Esophagus muscularis mucosa (tissue), 4 donors: ENCODE measurements at regions of chr7 and their contacts with region 1.

Region 1: GRCh38 chr7:150368096-150368883 is at the start of gene REPIN1:
- DNase-seq: peak; percentile 97
- H3K4me3 ChIP-seq: peak within 1 kb of the TSS; percentile 70 to 96 (median 82)
- H3K27ac ChIP-seq: peak within 1 kb of the TSS; percentile 91 to 98 (median 92)
- H3K4me1 ChIP-seq: peaks cover 32 to 48% (median 45%) of the 10 kb centered on the region in 4 donors
- H3K27me3 ChIP-seq: no peaks in the 10 kb centered on the region
- CTCF ChIP-seq: peak in 1 of 3 experiments; percentile 12
- EP300 ChIP-seq: no peak
- POLR2A ChIP-seq: peak; percentile 38
- total RNA-seq, gene REPIN1: 66.8 to 143 (median 97.7) TPM

Region 2: DNA sequence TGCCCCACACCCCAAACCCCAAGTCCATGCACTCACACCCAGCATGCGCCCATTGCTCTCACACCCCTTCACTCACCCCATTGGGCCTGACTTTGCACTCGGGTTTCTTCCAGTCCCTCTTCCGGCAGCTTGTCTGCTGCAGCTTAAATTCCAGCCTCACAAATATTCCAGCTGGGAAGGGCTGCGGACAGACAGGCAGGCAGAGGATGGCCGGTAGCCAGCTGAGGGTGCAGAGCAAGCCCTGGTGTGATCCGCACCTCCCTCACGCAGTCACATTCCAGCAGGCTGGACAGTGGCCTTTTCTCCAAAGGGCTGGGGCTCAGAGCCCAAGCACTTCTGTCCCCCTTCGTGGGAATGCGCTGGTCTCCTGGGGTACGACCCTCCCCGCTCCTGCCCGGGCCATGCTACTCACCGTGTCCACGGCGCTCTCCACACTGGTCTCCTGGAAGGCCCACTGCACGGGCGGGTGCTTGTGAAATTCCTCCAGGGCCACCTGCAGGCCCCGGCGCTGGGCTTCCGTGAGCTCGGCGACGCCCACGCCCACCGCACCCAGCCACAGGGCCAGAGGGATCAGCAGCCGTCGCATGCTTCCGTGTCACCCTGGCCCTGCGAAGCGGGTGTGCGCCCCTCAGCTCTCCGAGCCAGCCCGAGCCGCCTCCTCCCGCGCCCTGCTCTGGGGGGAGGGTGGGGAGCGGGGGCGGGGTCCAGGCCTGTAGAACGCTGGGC is 28.1 kb before region 1 on chr7:
- intact Hi-C with region 1: loop called (anchors 2 kb)
- DNase-seq: no peak
- H3K4me3 ChIP-seq: peak overlapping the region; percentile 59 to 79 (median 68)
- H3K27ac ChIP-seq: peak overlapping the region; percentile 82 to 93 (median 88)
- H3K4me1 ChIP-seq: peaks cover 32 to 71% (median 70%) of the 10 kb centered on the region in 4 donors
- H3K27me3 ChIP-seq: peaks cover 0 to 11% (median 2%) of the 10 kb centered on the region in 4 donors
- CTCF ChIP-seq: peak in 1 of 3 experiments; percentile 15
- EP300 ChIP-seq: no peak
- POLR2A ChIP-seq: no peak

Region 3: DNA sequence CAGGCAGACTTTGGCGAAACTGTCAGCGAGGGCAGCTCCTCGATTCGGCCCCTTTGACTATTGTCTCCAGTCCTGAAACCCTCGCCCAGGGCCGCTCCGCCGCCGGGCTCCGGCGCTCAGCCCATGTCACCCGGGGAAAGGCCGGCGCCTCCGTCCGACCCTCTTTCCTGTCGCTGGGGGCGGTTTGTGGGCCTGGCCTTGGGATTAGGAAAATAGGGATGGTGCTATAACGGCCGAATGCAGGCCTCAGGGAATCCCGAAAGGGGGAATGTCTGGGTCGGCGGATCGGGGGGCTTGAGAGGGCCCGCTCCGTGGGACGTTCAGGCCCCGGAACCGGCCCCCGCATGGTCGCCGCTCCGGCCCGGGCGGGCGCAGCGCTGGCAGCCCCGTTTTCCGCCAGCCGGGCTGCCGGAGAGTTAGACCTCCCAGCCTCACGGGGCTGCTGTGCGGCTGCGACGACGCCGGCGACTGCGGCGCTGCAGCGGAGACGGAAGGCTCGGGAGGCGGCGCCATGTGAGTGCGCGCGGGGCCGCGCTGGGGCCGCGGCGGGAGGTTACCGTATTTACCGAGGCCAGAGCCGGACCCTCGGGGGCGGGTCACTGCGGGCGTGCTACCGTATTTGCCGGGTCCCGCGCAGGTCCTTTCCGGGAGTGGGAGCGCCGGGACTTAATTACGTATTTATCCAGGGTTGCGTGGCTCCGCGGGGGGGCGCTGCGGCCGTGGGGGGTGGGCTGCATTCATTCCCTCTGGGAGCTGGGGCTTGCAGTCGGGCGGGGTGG is 36.7 kb after region 1 on chr7:
- intact Hi-C with region 1: loop called (anchors 5 kb)
- DNase-seq: peak; percentile 96
- H3K4me3 ChIP-seq: peak overlapping the region; percentile 73 to 86 (median 78)
- H3K27ac ChIP-seq: peak overlapping the region; percentile 93 to 98 (median 96)
- H3K4me1 ChIP-seq: peaks cover 20 to 46% (median 34%) of the 10 kb centered on the region in 4 donors
- H3K27me3 ChIP-seq: no peaks in the 10 kb centered on the region
- CTCF ChIP-seq: peak in 2 of 3 experiments; percentile 21 to 40
- EP300 ChIP-seq: no peak
- POLR2A ChIP-seq: peak; percentile 38

Region 4: GRCh38 chr7:150586785-150587152 is 218.5 kb after region 1 on chr7:
- intact Hi-C with region 1: no loop called
- DNase-seq: no peak
- H3K4me3 ChIP-seq: no peak overlapping the region
- H3K27ac ChIP-seq: peak overlapping the region; percentile 44 to 67 (median 58)
- H3K4me1 ChIP-seq: peaks cover 0 to 10% (median 5%) of the 10 kb centered on the region in 4 donors
- H3K27me3 ChIP-seq: no peaks in the 10 kb centered on the region
- CTCF ChIP-seq: no peak
- EP300 ChIP-seq: no peak
- POLR2A ChIP-seq: no peak